Breast epithelium (tissue), 4 donors: ENCODE measurements at regions of chr20 and their contacts with region 1.

Region 1: GRCh38 chr20:57558614-57559288 is 2.2 kb upstream of the PCK1 start:
- DNase-seq: no peak
- H3K4me3 ChIP-seq: no peak overlapping the region
- H3K27ac ChIP-seq: no peak overlapping the region
- H3K4me1 ChIP-seq: no peaks in the 10 kb centered on the region
- H3K27me3 ChIP-seq: peaks cover 0 to 21% of the 10 kb centered on the region in 2 donors
- CTCF ChIP-seq: no peak
- POLR2A ChIP-seq: no peak

Region 2: DNA sequence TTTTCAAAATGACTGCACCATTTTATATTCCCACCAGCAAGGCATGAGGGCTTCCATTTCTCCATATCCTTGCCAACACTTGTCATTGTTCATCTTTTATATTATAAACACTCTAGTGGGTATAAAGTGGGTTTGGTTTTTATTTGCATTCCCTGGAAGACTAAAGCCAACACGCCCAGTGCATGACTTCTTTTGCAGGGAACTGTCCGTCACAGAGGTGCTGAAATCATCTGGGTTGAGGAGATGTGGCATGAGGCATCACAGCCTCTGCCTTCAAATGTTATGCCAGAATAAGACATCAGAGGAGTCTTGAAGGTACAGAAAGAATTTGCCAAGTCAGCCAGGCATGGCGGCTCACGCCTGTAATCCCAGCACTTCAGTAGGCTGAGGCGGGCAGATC is 1229.9 kb before region 1 on chr20:
- intact Hi-C with region 1: loop called (anchors 5 kb)
- DNase-seq: no peak
- H3K4me3 ChIP-seq: no peak overlapping the region
- H3K27ac ChIP-seq: no peak overlapping the region
- H3K4me1 ChIP-seq: no peaks in the 10 kb centered on the region
- H3K27me3 ChIP-seq: no peaks in the 10 kb centered on the region
- CTCF ChIP-seq: no peak
- POLR2A ChIP-seq: no peak

Region 3: DNA sequence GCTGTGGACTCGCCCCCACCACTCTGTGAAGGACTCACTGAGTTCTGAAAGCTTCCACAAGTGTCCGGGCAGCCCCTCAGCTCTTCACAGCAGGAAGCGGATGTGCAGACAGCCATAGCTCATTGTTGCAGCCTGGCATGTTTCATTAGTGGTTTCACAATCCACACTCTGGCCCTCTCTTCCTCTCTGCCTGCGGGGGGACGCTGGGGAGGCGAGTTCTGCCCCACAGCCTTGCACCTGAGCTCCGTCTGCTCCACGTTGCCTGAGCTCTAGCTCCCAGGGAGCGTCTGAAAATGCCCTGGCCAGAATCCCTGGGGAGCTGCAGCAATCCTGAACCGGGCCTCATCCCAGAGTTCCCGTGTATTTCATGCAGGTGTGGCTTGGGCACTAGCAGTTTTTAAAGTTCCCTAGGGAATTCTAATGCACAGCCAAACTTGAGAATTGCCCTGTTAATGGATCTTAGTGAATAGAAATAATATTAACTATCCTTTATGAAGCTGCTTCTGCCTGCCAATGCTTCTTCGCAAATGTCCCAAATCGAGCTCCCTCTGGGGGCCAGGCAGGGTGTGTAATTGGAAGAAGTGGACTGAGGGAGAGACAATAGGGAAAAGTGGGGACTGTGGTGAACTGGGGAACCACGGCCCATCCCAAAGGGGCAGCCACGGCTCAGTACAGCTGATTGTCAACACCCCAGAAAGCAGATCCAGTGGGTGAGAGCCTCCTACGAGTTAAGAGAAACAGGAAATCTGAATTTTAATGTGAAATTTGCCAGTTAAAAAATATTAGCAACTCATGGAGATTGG is 85.3 kb before region 1 on chr20:
- intact Hi-C with region 1: no loop called
- DNase-seq: peak in 1 of 2 donors; percentile 40
- H3K4me3 ChIP-seq: peak overlapping the region in 1 of 3 donors; percentile 25
- H3K27ac ChIP-seq: peak overlapping the region in 1 of 2 donors; percentile 5
- H3K4me1 ChIP-seq: no peaks in the 10 kb centered on the region
- H3K27me3 ChIP-seq: peaks cover 0 to 9% of the 10 kb centered on the region in 2 donors
- CTCF ChIP-seq: no peak
- POLR2A ChIP-seq: no peak

Region 4: GRCh38 chr20:57582432-57583305 is 23.9 kb after region 1 on chr20:
- intact Hi-C with region 1: no loop called
- DNase-seq: no peak
- H3K4me3 ChIP-seq: peak overlapping the region in 1 of 3 donors; percentile 27
- H3K27ac ChIP-seq: peak overlapping the region in 1 of 2 donors; percentile 72
- H3K4me1 ChIP-seq: no peaks in the 10 kb centered on the region
- H3K27me3 ChIP-seq: peaks cover 0 to 68% of the 10 kb centered on the region in 2 donors
- CTCF ChIP-seq: no peak
- POLR2A ChIP-seq: no peak

Region 5: GRCh38 chr20:57680131-57680716 is 121.5 kb after region 1 on chr20:
- intact Hi-C with region 1: no loop called
- DNase-seq: no peak
- H3K4me3 ChIP-seq: no peak overlapping the region
- H3K27ac ChIP-seq: no peak overlapping the region
- H3K4me1 ChIP-seq: no peaks in the 10 kb centered on the region
- H3K27me3 ChIP-seq: no peaks in the 10 kb centered on the region
- CTCF ChIP-seq: no peak
- POLR2A ChIP-seq: no peak

Region 6: DNA sequence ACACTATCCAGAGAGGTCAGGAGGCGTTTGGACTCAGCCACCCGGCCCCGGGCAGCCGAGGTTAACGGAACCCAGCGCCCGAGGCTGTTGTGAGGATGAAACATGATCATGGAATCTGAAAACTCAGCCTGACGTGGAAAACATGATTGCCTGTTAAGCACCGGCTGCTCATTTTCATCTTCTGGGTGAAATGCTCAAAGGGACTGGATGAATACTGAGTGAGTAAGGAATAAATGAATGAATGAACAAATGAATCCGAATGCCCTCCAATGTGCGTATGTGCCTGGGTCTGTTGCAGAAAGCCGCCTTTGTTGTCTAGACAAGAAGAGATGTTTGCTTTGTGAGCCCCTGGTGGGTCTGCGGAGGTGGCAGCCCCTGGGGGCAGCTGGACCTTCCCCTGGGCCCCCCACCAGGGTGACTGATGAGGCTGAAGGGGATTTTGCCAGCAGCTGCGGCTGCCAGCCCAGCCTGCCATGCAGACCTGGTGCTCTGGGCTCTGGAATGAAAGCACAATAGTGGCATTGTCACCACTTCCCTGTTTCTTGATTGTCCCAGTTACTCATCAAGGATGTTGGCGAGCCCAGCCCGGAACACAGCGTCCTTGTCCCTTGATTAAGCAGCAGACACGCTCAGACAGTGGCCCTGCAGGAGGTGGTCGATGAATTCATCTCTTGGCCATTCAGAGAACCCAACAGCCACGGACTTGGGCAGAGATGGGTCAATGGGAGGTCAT is 458.7 kb after region 1 on chr20:
- intact Hi-C with region 1: no loop called
- DNase-seq: peak; percentile 81 to 96
- H3K4me3 ChIP-seq: peak overlapping the region in 1 of 3 donors; percentile 35
- H3K27ac ChIP-seq: peak overlapping the region; percentile 88 to 89
- H3K4me1 ChIP-seq: peaks cover 11 to 15% of the 10 kb centered on the region in 2 donors
- H3K27me3 ChIP-seq: no peaks in the 10 kb centered on the region
- CTCF ChIP-seq: peak in 1 of 3 donors; percentile 40
- POLR2A ChIP-seq: no peak